ENCODE measurements at regions of chr3 and their contacts with region 1.

Region 1: GRCh38 chr3:43503067-43503728 is 118.6 kb downstream of the ANO10 start:
- DNase-seq: no peak
- H3K4me3 ChIP-seq: no peak overlapping the region
- H3K27ac ChIP-seq: no peak overlapping the region
- H3K4me1 ChIP-seq: peaks cover 6 to 41% (median 23%) of the 10 kb centered on the region in 6 donors
- H3K27me3 ChIP-seq: no peaks in the 10 kb centered on the region
- CTCF ChIP-seq: peak in 10 of 11 experiments; percentile 11 to 65 (median 52)
- POLR2A ChIP-seq: no peak

Region 2: GRCh38 chr3:43162230-43163084 is 340.7 kb before region 1 on chr3:
- intact Hi-C with region 1: loop called (anchors 5 kb)
- DNase-seq: no peak
- H3K4me3 ChIP-seq: peak overlapping the region in 2 of 8 donors; percentile 4 to 49
- H3K27ac ChIP-seq: peak overlapping the region; percentile 21 to 84 (median 68)
- H3K4me1 ChIP-seq: peaks cover 6 to 23% (median 16%) of the 10 kb centered on the region in 6 donors
- H3K27me3 ChIP-seq: no peaks in the 10 kb centered on the region
- CTCF ChIP-seq: peak in 8 of 11 experiments; percentile 18 to 65 (median 50)
- POLR2A ChIP-seq: no peak

Region 3: DNA sequence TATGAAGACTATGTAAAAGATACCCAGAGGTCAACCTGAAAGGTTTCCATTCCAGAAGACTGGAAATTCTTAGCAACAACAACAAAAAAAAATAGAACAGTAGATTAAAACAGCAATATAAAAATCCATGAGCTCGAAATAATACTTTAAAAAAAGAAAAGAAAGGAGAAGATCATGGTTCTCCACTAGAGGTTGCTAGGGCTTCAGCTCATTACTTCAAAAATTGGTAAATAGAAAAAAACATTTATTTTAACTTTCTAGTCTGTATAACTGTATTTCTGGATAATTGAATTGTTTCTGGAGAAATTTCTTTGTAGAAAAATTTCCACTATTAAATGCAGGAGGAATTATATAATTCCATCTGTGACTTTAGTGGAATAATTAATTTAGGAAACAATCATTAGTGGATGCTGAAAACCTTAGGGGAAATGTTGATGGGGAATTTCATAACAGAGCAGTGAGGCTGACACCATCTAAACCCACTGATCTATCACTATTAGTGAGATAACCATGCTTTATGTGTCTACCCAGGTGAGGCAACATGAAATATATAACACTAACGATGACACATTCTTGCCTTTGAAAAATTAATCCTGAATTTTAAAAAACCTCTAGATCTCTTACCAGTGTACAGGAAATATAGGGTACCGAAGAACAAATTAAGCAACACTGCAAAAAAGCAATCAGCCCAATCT is 279.4 kb before region 1 on chr3:
- intact Hi-C with region 1: loop called (anchors 5 kb)
- DNase-seq: no peak
- H3K4me3 ChIP-seq: no peak overlapping the region
- H3K27ac ChIP-seq: no peak overlapping the region
- H3K4me1 ChIP-seq: peaks cover 0 to 22% (median 5%) of the 10 kb centered on the region in 6 donors
- H3K27me3 ChIP-seq: no peaks in the 10 kb centered on the region
- CTCF ChIP-seq: peak in 9 of 11 experiments; percentile 37 to 55 (median 43)
- POLR2A ChIP-seq: no peak

Region 4: GRCh38 chr3:43378066-43378935 is 124.9 kb before region 1 on chr3:
- intact Hi-C with region 1: no loop called
- DNase-seq: peak; percentile 82
- H3K4me3 ChIP-seq: no peak overlapping the region
- H3K27ac ChIP-seq: peak overlapping the region in 1 of 8 donors; percentile 28
- H3K4me1 ChIP-seq: peaks cover 2 to 21% (median 6%) of the 10 kb centered on the region in 6 donors
- H3K27me3 ChIP-seq: no peaks in the 10 kb centered on the region
- CTCF ChIP-seq: peak; percentile 48 to 83 (median 73)
- POLR2A ChIP-seq: no peak

Region 5: GRCh38 chr3:43389388-43390254 is 113.6 kb before region 1 on chr3:
- intact Hi-C with region 1: loop called (anchors 10 kb)
- DNase-seq: peak; percentile 89
- H3K4me3 ChIP-seq: peak overlapping the region in 1 of 8 donors; percentile 60
- H3K27ac ChIP-seq: peak overlapping the region; percentile 69 to 95 (median 89)
- H3K4me1 ChIP-seq: peaks cover 10 to 62% (median 41%) of the 10 kb centered on the region in 6 donors
- H3K27me3 ChIP-seq: no peaks in the 10 kb centered on the region
- CTCF ChIP-seq: no peak
- POLR2A ChIP-seq: no peak